ENCODE measurements at regions of chr3 and their contacts with region 1.

Region 1: DNA sequence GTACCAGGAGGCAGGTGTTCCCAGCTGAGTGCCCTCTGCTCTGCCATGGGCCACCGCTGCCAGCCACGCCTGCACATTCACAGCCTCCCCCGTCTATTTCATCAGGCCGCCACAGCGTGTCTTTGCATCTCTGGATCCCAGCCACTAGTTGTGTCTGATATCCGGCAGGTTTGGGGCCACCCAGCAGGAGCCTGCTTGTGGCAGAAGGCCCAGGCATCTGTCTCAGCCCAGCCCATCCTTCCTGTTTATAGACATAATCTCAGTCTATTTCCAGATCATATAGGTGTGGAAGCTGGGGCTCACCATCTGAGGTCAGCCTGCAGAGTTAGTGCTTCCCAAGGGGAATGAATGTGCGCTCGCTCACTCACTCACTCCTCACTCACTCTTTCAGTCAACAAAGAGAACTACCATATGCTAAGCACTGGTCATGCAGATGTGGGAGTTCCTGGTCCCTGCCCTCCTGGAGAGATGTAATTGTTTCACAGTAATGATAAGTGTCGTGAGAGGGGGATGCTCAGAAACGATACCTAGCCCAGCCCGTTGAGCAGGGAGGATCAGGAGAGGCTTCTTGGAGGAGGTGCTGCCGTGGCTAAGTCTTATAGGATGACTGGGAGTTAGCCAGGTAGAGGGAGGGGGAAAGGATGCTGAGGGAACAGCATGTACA is 60.6 kb downstream of the FGD5 start:
- DNase-seq: peak; percentile 56

Region 2: GRCh38 chr3:13034109-13034800 is 1845.1 kb before region 1 on chr3:
- intact Hi-C with region 1: no loop called
- DNase-seq: no peak

Region 3: GRCh38 chr3:14863333-14864100 is 15.8 kb before region 1 on chr3:
- intact Hi-C with region 1: no loop called
- DNase-seq: peak; percentile 56

Region 4: GRCh38 chr3:14913926-14914778 is 34.8 kb after region 1 on chr3:
- intact Hi-C with region 1: no loop called
- DNase-seq: no peak

Region 5: GRCh38 chr3:15460891-15461531 is 581.7 kb after region 1 on chr3:
- intact Hi-C with region 1: loop called in 1 of 2 experiments (anchors 10 kb)
- DNase-seq: no peak

Region 6: GRCh38 chr3:16064642-16065414 is 1185.5 kb after region 1 on chr3:
- intact Hi-C with region 1: no loop called
- DNase-seq: peak; percentile 93

Measured in posterior vena cava (tissue), 2 donors.